Activated naive CD4-positive, alpha-beta T cell treated with anti-CD3 and anti-CD28 coated beads for 36 hours (primary cell): ENCODE measurements at regions of chr6 and their contacts with region 1.

Region 1: DNA sequence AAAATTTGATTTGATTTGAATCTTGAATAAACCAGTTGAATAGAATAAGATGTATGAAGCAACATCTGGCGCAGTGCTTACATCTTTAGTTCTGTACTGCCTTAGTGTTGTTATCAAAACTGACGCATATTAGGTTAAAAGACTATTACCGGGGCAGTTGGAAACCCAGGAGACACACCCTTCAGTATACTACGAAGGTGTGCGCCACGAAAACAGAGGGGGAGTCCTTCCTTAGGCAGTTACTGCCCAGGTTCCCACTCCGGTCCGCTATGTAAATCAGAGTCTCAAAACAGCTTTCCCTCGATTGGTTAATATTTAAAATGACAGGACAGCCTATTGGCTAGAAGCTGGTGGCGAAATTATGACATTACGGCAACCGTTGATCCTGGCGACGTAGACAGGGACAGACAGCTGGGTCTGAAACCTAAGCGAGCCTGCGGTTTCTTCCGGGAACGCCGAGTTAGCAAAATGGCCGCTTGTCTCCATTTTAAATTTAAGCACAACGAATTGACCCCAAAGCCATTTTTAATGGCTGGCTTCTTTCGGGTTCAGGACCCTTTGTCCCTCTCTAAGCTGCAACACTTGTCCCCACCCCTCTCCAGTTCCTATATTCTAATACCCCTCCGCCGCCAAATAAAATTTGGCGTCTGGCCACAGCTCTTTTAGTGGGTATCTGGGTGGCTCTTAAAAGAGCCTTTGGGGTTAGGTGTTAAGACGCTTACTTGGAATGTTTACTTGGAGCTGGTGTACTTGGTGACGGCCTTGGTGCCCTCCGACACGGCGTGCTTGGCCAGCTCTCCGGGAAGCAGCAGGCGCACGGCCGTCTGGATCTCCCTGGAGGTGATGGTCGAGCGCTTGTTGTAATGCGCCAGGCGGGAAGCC is 35.8 kb downstream of the HFE start:
- DNase-seq: peak; percentile 98
- H3K4me3 Mint-ChIP-seq: peak overlapping the region; percentile 97
- H3K27ac Mint-ChIP-seq: peak overlapping the region; percentile 99
- H3K4me1 Mint-ChIP-seq: peaks cover 36% of the 10 kb centered on the region
- H3K27me3 Mint-ChIP-seq: peaks cover 6% of the 10 kb centered on the region

Region 2: GRCh38 chr6:26054857-26055669 is 68.0 kb before region 1 on chr6:
- CTCF ChIA-PET with region 1: interaction called, 3 read pairs
- intact Hi-C with region 1: loop called (anchors 1 kb)
- DNase-seq: peak; percentile 95
- H3K4me3 Mint-ChIP-seq: peak overlapping the region; percentile 97
- H3K27ac Mint-ChIP-seq: peak overlapping the region; percentile 100
- H3K4me1 Mint-ChIP-seq: peaks cover 18% of the 10 kb centered on the region
- H3K27me3 Mint-ChIP-seq: peaks cover 11% of the 10 kb centered on the region

Region 3: GRCh38 chr6:26175428-26176181 is 52.6 kb after region 1 on chr6:
- CTCF ChIA-PET with region 1: interaction called, 4 read pairs
- intact Hi-C with region 1: loop called (anchors 1 kb)
- DNase-seq: peak; percentile 77
- H3K4me3 Mint-ChIP-seq: no peak overlapping the region
- H3K27ac Mint-ChIP-seq: no peak overlapping the region
- H3K4me1 Mint-ChIP-seq: peaks cover 34% of the 10 kb centered on the region
- H3K27me3 Mint-ChIP-seq: no peaks in the 10 kb centered on the region

Region 4: GRCh38 chr6:26234421-26235296 is 111.6 kb after region 1 on chr6:
- CTCF ChIA-PET with region 1: no interaction called
- intact Hi-C with region 1: loop called (anchors 1 kb)
- DNase-seq: peak; percentile 90
- H3K4me3 Mint-ChIP-seq: peak overlapping the region; percentile 83
- H3K27ac Mint-ChIP-seq: peak overlapping the region; percentile 100
- H3K4me1 Mint-ChIP-seq: peaks cover 28% of the 10 kb centered on the region
- H3K27me3 Mint-ChIP-seq: peaks cover 3% of the 10 kb centered on the region

Region 5: GRCh38 chr6:26285143-26286134 is 162.4 kb after region 1 on chr6:
- CTCF ChIA-PET with region 1: no interaction called
- intact Hi-C with region 1: loop called (anchors 1 kb)
- DNase-seq: peak; percentile 99
- H3K4me3 Mint-ChIP-seq: peak overlapping the region; percentile 93
- H3K27ac Mint-ChIP-seq: peak overlapping the region; percentile 100
- H3K4me1 Mint-ChIP-seq: peaks cover 16% of the 10 kb centered on the region
- H3K27me3 Mint-ChIP-seq: peaks cover 3% of the 10 kb centered on the region

Region 6: DNA sequence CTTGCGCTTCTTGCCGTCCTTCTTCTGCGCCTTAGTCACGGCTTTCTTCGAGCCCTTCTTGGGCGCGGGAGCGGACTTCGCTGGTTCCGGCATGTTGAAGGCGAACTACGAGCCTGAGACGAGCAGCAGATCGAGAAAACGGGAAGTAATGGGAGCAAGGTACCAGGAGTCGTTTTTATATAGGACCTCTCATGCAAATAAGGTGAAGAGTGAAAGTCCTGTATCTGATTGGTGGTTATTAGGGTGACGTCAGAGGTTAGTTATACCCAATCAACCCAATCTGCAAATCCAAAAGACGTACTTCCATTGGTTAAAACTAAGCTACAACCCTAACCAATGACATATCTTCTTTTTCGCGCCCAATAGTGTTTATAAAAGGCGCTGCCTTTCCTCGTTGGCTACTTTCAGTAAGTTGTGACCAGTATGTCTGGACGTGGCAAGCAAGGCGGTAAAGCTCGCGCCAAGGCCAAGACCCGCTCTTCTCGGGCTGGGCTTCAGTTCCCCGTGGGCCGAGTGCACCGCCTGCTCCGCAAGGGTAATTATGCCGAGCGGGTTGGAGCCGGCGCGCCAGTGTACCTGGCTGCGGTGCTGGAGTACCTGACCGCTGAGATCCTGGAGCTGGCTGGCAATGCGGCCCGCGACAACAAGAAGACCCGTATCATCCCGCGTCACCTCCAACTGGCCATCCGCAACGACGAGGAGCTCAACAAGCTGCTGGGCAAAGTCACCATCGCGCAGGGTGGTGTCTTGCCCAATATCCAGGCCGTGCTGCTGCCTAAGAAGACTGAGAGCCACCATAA is 1023.9 kb after region 1 on chr6:
- CTCF ChIA-PET with region 1: no interaction called
- intact Hi-C with region 1: loop called (anchors 5 kb)
- DNase-seq: peak; percentile 87
- H3K4me3 Mint-ChIP-seq: no peak overlapping the region
- H3K27ac Mint-ChIP-seq: no peak overlapping the region
- H3K4me1 Mint-ChIP-seq: peaks cover 11% of the 10 kb centered on the region
- H3K27me3 Mint-ChIP-seq: no peaks in the 10 kb centered on the region